HepG2 (cell line): ENCODE measurements at regions of chr11 and their contacts with region 1.

Region 1: GRCh38 chr11:102495161-102496042 is 35.1 kb downstream of the MMP7 start:
- DNase-seq: peak; percentile 86
- ATAC-seq: peak; percentile 81
- H3K4me3 ChIP-seq: peak overlapping the region in 2 of 3 experiments; percentile 6 to 38; a peak in 3 of 6 replicates
- H3K27ac ChIP-seq: peak overlapping the region; percentile 39
- H3K4me1 ChIP-seq: peaks cover 56% of the 10 kb centered on the region
- H3K27me3 ChIP-seq: no peaks in the 10 kb centered on the region
- CTCF ChIP-seq: peak; percentile 82
- EP300 ChIP-seq: no peak
- POLR2A ChIP-seq: no peak
- RAD21 ChIP-seq: peak; percentile 86

Region 2: GRCh38 chr11:102244681-102245409 is 250.6 kb before region 1 on chr11:
- CTCF ChIA-PET with region 1: no interaction called
- POLR2A ChIA-PET with region 1: no interaction called
- in situ Hi-C with region 1: no loop called
- intact Hi-C with region 1: no loop called
- DNase-seq: no peak
- ATAC-seq: peak; percentile 16; the same call in 2 of the 3 replicates
- H3K4me3 ChIP-seq: no peak overlapping the region
- H3K27ac ChIP-seq: no peak overlapping the region
- H3K4me1 ChIP-seq: peaks cover 50% of the 10 kb centered on the region
- H3K27me3 ChIP-seq: no peaks in the 10 kb centered on the region
- CTCF ChIP-seq: no peak
- EP300 ChIP-seq: no peak
- POLR2A ChIP-seq: no peak
- RAD21 ChIP-seq: no peak

Region 3: DNA sequence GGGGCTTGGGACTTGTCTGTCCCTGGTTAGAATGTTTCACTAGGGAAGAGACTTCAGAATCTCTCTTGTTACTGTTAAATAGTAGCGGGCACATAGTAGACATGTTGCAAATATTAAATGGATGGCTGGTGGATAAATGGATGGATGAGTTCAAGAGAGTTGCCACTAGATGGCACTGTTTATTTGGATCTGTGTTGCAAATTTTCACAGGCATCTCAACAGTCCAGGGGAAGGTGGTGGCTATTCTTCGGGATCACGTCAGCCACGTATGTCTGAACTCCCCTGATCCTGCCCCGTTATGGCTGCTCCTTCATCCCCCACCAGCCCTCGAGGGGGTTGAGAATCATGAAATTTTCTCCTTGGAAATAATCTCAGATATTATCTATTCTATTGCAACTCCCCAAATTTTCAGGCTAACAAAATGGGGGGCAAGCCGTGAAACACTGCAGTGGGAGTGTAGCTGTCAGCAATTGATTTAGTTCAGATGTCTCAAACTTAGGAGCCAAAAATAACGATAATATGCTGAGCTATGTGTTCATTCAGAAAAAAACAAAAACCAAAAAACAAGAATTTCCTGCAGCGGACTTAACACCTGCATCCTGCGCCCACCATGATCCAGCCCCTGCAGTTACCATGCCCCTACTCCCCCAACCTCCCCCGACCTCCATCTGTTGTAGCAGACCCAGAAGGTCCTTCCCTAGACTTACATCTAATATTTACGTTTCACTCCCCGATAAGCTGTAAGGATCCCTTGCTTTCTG is 207.3 kb before region 1 on chr11:
- CTCF ChIA-PET with region 1: no interaction called
- POLR2A ChIA-PET with region 1: no interaction called
- in situ Hi-C with region 1: no loop called
- intact Hi-C with region 1: loop called (anchors 1 kb)
- DNase-seq: peak; percentile 68
- ATAC-seq: peak; percentile 86
- H3K4me3 ChIP-seq: no peak overlapping the region
- H3K27ac ChIP-seq: no peak overlapping the region
- H3K4me1 ChIP-seq: peaks cover 55% of the 10 kb centered on the region
- H3K27me3 ChIP-seq: no peaks in the 10 kb centered on the region
- CTCF ChIP-seq: peak; percentile 85
- EP300 ChIP-seq: 0 out of 4 replicates have a peak, but pooled peaks of 1 of the 2 experiments have one; percentile 13
- POLR2A ChIP-seq: no peak
- RAD21 ChIP-seq: peak; percentile 74

Region 4: DNA sequence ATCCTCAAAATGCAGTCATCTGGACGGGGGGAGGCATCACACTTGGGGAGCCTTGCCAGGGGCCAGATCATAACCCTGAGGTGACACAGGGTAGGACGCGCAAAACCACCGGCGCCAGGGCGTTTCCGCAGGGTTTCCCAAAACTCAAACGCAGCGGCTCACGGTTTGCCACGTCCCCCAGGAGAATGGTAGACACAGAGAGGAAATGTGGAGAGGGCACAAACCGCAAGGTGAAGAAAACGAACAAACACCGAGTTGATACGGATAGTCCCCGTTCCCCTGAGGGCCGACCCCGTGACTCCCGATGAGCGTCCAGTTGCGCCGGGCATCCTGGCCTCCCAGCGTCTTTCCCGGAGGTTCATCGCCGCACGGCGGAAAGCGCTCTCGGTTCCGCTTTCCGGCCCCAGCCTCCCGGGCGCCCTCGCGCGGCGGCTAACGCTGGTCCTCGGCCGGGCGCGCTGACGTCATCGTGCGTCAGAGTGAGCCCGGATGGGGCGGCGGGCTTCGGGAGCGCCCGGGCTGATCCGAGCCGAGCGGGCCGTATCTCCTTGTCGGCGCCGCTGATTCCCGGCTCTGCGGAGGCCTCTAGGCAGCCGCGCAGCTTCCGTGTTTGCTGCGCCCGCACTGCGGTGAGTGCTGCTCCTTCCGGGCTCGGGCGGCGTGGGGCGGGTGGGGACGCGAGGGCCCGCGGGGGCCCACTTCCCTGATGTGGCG is 148.5 kb before region 1 on chr11 and contains the start of gene BIRC2:
- CTCF ChIA-PET with region 1: interaction called, 19 read pairs
- POLR2A ChIA-PET with region 1: interaction called, 3 read pairs
- in situ Hi-C with region 1: loop called (anchors 10 kb)
- intact Hi-C with region 1: no loop called
- DNase-seq: peak; percentile 79
- ATAC-seq: peak; percentile 96
- H3K4me3 ChIP-seq: peak within 1 kb of the TSS; percentile 85 to 98 (median 96)
- H3K27ac ChIP-seq: peak within 1 kb of the TSS; percentile 96
- H3K4me1 ChIP-seq: peaks cover 30% of the 10 kb centered on the region
- H3K27me3 ChIP-seq: no peaks in the 10 kb centered on the region; a peak in 1 of 5 replicates
- CTCF ChIP-seq: peak; percentile 95
- EP300 ChIP-seq: peak; percentile 16 to 38; a peak in 1 of 4 replicates
- POLR2A ChIP-seq: peak; percentile 78 to 82
- RAD21 ChIP-seq: peak; percentile 78
- total RNA-seq, gene BIRC2: 61.7 and 83.2 TPM in 2 replicates

Region 5: GRCh38 chr11:102390667-102391465 is 104.5 kb before region 1 on chr11:
- CTCF ChIA-PET with region 1: interaction called, 24 read pairs
- POLR2A ChIA-PET with region 1: interaction called, 5 read pairs
- in situ Hi-C with region 1: loop called (anchors 5 kb)
- intact Hi-C with region 1: loop called (anchors 1 kb)
- DNase-seq: peak; percentile 70
- ATAC-seq: peak; percentile 84
- H3K4me3 ChIP-seq: no peak overlapping the region
- H3K27ac ChIP-seq: no peak overlapping the region
- H3K4me1 ChIP-seq: no peaks in the 10 kb centered on the region; the same call in 1 of the 2 replicates
- H3K27me3 ChIP-seq: no peaks in the 10 kb centered on the region
- CTCF ChIP-seq: peak; percentile 92
- EP300 ChIP-seq: no peak
- POLR2A ChIP-seq: no peak
- RAD21 ChIP-seq: peak; percentile 78

Region 6: GRCh38 chr11:102451681-102452460 is 43.5 kb before region 1 on chr11:
- CTCF ChIA-PET with region 1: interaction called, 3 read pairs
- POLR2A ChIA-PET with region 1: interaction called, 8 read pairs
- in situ Hi-C with region 1: no loop called
- intact Hi-C with region 1: loop called (anchors 1 kb)
- DNase-seq: peak; percentile 96
- ATAC-seq: peak; percentile 83
- H3K4me3 ChIP-seq: peak overlapping the region; percentile 87 to 95 (median 91)
- H3K27ac ChIP-seq: peak overlapping the region; percentile 96
- H3K4me1 ChIP-seq: peaks cover 71% of the 10 kb centered on the region
- H3K27me3 ChIP-seq: no peaks in the 10 kb centered on the region; a peak in 1 of 5 replicates
- CTCF ChIP-seq: peak; percentile 52
- EP300 ChIP-seq: peak in 1 of 2 experiments; percentile 85; a peak in 1 of 4 replicates
- POLR2A ChIP-seq: peak; percentile 49 to 82
- RAD21 ChIP-seq: 0 out of 2 replicates have a peak, but pooled peaks have one; percentile 13

Region 7: GRCh38 chr11:102604877-102605276 is 109.5 kb after region 1 on chr11:
- CTCF ChIA-PET with region 1: no interaction called
- POLR2A ChIA-PET with region 1: no interaction called
- in situ Hi-C with region 1: loop called (anchors 5 kb)
- intact Hi-C with region 1: no loop called
- DNase-seq: no peak
- ATAC-seq: no peak
- H3K4me3 ChIP-seq: no peak overlapping the region
- H3K27ac ChIP-seq: no peak overlapping the region
- H3K4me1 ChIP-seq: peaks cover 44% of the 10 kb centered on the region
- H3K27me3 ChIP-seq: no peaks in the 10 kb centered on the region
- CTCF ChIP-seq: no peak
- EP300 ChIP-seq: no peak
- POLR2A ChIP-seq: no peak
- RAD21 ChIP-seq: no peak

Region 8: GRCh38 chr11:102666331-102666957 is 171.0 kb after region 1 on chr11:
- CTCF ChIA-PET with region 1: interaction called, 3 read pairs
- POLR2A ChIA-PET with region 1: no interaction called
- in situ Hi-C with region 1: no loop called
- intact Hi-C with region 1: loop called (anchors 2 kb)
- DNase-seq: peak; percentile 46
- ATAC-seq: peak; percentile 82
- H3K4me3 ChIP-seq: no peak overlapping the region
- H3K27ac ChIP-seq: no peak overlapping the region
- H3K4me1 ChIP-seq: peaks cover 7% of the 10 kb centered on the region; the same call in 1 of the 2 replicates
- H3K27me3 ChIP-seq: no peaks in the 10 kb centered on the region; a peak in 1 of 5 replicates
- CTCF ChIP-seq: peak; percentile 81
- EP300 ChIP-seq: no peak
- POLR2A ChIP-seq: no peak
- RAD21 ChIP-seq: peak; percentile 60; the same call in 1 of the 2 replicates